Posterior vena cava (tissue), 2 donors: ENCODE measurements at regions of chr18 and their contacts with region 1.

Region 1: GRCh38 chr18:76686737-76687262 is 135.6 kb upstream of the ZNF236 start:
- DNase-seq: peak; percentile 89

Region 2: DNA sequence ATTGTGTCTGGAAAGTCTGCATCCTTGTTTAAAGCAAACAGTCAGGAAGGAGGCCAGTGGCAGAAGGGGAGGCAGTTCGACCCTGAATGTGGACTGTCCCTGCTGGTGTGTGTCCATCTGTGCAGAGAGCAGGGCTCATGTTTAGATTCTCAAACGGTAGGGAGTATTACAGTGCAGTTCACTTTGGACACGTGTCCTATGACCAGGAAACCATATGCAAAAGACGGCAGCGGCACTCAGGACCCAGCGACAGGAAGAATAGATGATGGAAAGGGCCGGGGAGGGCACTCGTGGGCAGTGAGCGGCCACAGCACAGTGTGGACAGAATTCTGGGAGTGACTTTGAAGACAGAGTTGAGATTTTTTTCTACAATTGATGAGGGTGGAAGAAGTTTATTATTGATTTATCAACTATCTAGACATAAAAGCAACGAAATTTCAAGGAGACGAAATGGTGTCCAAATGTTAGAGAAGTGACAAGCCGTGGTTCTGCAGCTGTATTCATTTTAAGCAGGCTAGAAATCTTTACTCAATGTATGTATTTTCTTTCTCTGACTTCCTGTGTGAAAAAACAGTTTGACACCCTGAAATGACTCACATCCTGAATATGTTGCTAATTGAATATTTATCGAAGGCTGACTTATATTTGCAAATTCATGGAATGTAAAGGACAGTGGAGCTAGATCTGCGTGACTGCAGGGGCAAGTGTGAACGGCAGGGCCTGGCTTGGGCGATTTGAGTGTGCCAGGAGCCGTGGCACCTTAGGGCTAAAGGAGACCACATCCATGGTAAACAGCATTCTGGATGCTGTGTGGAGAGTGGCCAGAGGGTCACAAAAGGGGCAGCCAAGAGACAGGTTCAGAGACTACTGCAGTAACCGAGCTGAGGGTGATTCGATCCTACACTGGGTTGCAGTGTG is 1692.0 kb before region 1 on chr18:
- intact Hi-C with region 1: no loop called
- DNase-seq: no peak

Region 3: GRCh38 chr18:75422341-75422910 is 1264.4 kb before region 1 on chr18:
- intact Hi-C with region 1: loop called in 1 of 2 experiments (anchors 5 kb)
- DNase-seq: no peak

Region 4: GRCh38 chr18:76398896-76399612 is 287.7 kb before region 1 on chr18:
- intact Hi-C with region 1: loop called in 1 of 2 experiments (anchors 5 kb)
- DNase-seq: peak; percentile 94

Region 5: GRCh38 chr18:76619621-76620315 is 67.0 kb before region 1 on chr18:
- intact Hi-C with region 1: loop called in 1 of 2 experiments (anchors 10 kb)
- DNase-seq: peak; percentile 85